ENCODE measurements at regions of chr2 and their contacts with region 1.

Region 1: DNA sequence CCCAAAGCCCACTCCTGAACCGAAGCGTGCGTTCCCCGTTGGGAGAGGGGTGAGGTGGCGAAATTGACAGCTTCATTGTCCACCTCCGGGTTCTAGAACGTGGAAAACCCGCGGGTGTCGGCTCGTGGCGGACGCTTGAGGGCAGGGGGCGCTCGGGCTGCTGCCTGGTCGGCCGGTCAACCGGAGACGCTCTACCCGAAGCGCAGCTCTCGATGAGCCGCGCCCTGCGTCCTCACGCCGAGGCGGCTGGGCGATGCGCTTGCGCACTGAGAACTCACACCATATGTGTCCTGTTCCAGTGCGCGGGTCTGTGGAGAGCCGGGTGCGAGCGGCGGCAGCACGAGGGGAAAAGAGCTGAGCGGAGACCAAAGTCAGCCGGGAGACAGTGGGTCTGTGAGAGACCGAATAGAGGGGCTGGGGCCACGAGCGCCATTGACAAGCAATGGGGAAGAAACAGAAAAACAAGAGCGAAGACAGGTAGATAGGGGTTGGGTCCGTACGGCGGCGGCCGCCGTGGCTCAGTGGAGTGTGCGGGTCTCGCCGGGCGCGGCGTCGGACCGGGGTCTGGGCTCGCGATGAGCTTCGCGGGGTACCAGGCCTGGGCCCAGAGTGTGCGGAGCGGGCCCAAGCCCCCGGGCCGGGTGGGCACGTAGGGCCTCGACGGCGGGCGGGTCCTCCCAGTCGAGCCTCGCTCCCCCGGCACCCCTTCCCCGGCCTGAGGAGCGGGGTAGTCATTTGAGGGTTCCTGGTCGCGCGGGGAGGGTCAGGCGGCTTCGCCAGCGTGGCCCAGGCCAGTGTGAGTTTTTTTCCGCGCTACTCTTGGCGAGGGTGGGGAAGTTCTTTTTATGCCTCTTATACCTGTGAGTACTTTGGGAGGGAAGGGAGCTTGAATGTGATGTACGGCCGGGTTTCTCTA is at the start of gene EIF5B:
- DNase-seq: peak; percentile 96
- ATAC-seq: peak; percentile 92
- H3K4me3 ChIP-seq: peak within 1 kb of the TSS; percentile 88 to 98 (median 94)
- H3K27ac ChIP-seq: peak within 1 kb of the TSS; percentile 88
- H3K4me1 ChIP-seq: peaks cover 64% of the 10 kb centered on the region
- H3K27me3 ChIP-seq: no peaks in the 10 kb centered on the region; a peak in 1 of 5 replicates
- CTCF ChIP-seq: peak; percentile 98
- EP300 ChIP-seq: peak in 1 of 2 experiments; percentile 41; a peak in 1 of 4 replicates
- POLR2A ChIP-seq: peak; percentile 86 to 93
- RAD21 ChIP-seq: peak; percentile 50
- total RNA-seq, gene EIF5B: 32.1 and 66.4 TPM in 2 replicates

Region 2: DNA sequence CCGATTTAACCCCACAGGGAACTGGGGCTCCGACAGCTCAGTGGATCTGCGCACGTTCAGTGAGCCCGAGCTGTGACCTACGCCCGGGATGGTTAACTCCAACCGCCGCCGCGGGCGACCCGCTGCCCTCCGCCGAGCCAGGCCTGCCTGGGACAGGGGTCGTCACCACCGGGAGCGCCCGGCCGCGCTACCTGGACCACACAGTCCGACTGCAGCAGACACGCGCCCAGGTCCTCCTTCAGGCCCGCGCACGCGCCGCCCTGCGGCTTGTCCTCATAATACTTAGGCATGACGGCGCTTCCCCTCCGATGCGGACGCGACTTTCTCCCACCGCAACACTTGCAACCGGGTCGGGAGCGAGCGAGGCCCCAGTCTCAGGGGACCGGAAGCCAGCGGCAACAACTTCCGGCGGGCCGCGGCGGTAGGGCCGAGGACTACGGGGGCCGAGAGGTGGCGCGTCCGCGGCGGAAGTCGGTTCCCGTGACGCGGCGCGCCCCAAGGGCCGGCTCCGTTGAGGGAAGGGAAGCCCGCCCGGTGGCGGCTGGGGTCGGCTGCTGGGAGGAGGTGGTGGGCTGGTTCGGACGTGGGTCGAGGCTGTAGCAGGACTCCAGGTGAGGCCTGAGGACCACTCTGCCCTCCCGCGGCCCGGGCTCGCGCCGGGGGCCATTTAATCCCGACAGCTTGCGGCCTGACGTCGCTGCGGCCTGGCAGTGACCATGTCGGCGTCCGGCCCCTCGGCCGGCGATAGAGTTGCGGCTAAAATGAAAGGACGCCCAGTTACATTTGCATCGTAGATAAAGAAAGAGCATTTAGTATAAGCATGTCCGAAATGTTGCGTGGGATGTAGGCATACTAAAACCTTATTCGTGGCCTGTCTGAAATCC is 729.0 kb before region 1 on chr2 and contains the starts of genes COA5 and UNC50:
- CTCF ChIA-PET with region 1: no interaction called
- POLR2A ChIA-PET with region 1: no interaction called
- in situ Hi-C with region 1: no loop called
- intact Hi-C with region 1: loop called (anchors 5 kb)
- DNase-seq: peak; percentile 86
- ATAC-seq: peak; percentile 95
- H3K4me3 ChIP-seq: peak within 1 kb of the TSS; percentile 95 to 98 (median 97)
- H3K27ac ChIP-seq: peak within 1 kb of the TSS; percentile 88
- H3K4me1 ChIP-seq: peaks cover 41% of the 10 kb centered on the region
- H3K27me3 ChIP-seq: no peaks in the 10 kb centered on the region; a peak in 1 of 5 replicates
- CTCF ChIP-seq: peak; percentile 42; the same call in 1 of the 2 replicates
- EP300 ChIP-seq: peak; percentile 48 to 51; a peak in 1 of 4 replicates
- POLR2A ChIP-seq: peak; percentile 92 to 97
- RAD21 ChIP-seq: peak; percentile 52
- total RNA-seq, gene COA5: 64.5 and 72.9 TPM in 2 replicates
- total RNA-seq, gene UNC50: 58.0 and 95.6 TPM in 2 replicates

Region 3: DNA sequence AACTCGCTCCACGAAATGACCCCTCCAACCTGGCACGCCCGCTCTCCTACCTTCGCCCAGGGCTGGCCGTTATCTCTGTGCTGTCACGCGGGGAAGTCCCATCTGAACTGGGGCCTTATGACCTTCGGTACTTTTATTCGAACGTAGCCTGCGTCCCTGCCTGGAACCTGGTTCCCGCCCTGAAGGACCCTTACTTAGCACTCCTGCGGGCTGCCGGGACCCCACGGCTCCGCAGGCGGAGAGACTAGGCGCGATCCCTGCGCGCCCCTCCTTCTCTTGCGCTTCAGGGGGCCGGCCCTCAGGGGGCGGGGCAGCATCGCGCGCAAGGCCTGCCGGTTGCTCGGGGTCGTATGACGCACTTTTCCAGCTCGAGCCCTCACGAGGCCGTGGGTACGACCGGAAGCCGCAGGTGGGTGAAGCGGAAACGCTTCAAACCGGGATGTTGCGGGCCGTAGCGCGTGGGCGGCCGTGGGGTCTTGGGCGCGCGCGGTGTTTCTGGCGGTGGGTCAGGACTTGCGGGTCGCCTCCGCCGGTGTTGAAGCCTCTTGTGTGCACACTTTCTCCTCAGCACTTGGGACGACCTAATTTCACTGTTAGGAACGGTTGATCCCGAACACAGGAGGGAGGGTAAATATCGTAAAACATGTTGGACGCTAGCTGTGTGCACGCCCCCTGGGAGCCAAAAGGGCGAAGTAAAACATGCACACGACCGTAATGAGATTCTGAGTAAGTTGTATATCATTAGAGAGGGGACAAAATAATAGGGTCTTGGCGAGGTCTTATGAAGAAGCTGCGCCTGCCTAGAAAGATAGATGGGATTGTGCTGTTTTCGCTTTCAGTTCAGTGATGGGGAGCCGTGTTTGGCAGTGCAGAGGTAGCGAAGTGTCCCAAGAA is 182.5 kb before region 1 on chr2 and contains the starts of genes LIPT1 and TSGA10:
- CTCF ChIA-PET with region 1: no interaction called
- POLR2A ChIA-PET with region 1: interaction called, 30 read pairs
- in situ Hi-C with region 1: no loop called
- intact Hi-C with region 1: no loop called
- DNase-seq: peak; percentile 93
- ATAC-seq: peak; percentile 97
- H3K4me3 ChIP-seq: peak within 1 kb of the TSS; percentile 80 to 90 (median 85)
- H3K27ac ChIP-seq: peak within 1 kb of the TSS; percentile 79
- H3K4me1 ChIP-seq: peaks cover 44% of the 10 kb centered on the region
- H3K27me3 ChIP-seq: no peaks in the 10 kb centered on the region; a peak in 1 of 5 replicates
- CTCF ChIP-seq: peak; percentile 54
- EP300 ChIP-seq: no peak; a peak in 1 of 4 replicates
- POLR2A ChIP-seq: peak; percentile 93 to 99
- RAD21 ChIP-seq: peak; percentile 50; the same call in 1 of the 2 replicates
- total RNA-seq, gene LIPT1: 8.0 and 8.3 TPM in 2 replicates
- total RNA-seq, gene TSGA10: 13.1 and 15.0 TPM in 2 replicates

Region 4: GRCh38 chr2:99278793-99279291 is 58.5 kb before region 1 on chr2:
- CTCF ChIA-PET with region 1: no interaction called
- POLR2A ChIA-PET with region 1: interaction called, 22 read pairs
- in situ Hi-C with region 1: no loop called
- intact Hi-C with region 1: loop called (anchors 1 kb)
- DNase-seq: peak; percentile 99
- ATAC-seq: peak; percentile 93
- H3K4me3 ChIP-seq: peak overlapping the region in 2 of 3 experiments; percentile 4 to 49; a peak in 2 of 6 replicates
- H3K27ac ChIP-seq: peak overlapping the region; percentile 64
- H3K4me1 ChIP-seq: peaks cover 39% of the 10 kb centered on the region
- H3K27me3 ChIP-seq: no peaks in the 10 kb centered on the region
- CTCF ChIP-seq: no peak
- EP300 ChIP-seq: peak in 1 of 2 experiments; percentile 97; a peak in 2 of 4 replicates
- POLR2A ChIP-seq: no peak
- RAD21 ChIP-seq: no peak

Region 5: GRCh38 chr2:99374747-99375146 is 37.4 kb after region 1 on chr2:
- CTCF ChIA-PET with region 1: no interaction called
- POLR2A ChIA-PET with region 1: no interaction called
- in situ Hi-C with region 1: no loop called
- intact Hi-C with region 1: loop called (anchors 5 kb)
- DNase-seq: no peak
- ATAC-seq: no peak
- H3K4me3 ChIP-seq: no peak overlapping the region
- H3K27ac ChIP-seq: no peak overlapping the region
- H3K4me1 ChIP-seq: no peaks in the 10 kb centered on the region
- H3K27me3 ChIP-seq: no peaks in the 10 kb centered on the region
- CTCF ChIP-seq: no peak
- EP300 ChIP-seq: no peak
- POLR2A ChIP-seq: no peak
- RAD21 ChIP-seq: no peak

Region 6: GRCh38 chr2:99489761-99490622 is 152.6 kb after region 1 on chr2 and contains the start of gene REV1:
- CTCF ChIA-PET with region 1: no interaction called
- POLR2A ChIA-PET with region 1: interaction called, 8 read pairs
- in situ Hi-C with region 1: no loop called
- intact Hi-C with region 1: loop called (anchors 1 kb)
- DNase-seq: peak; percentile 91
- ATAC-seq: peak; percentile 86
- H3K4me3 ChIP-seq: peak within 1 kb of the TSS; percentile 79 to 99 (median 97)
- H3K27ac ChIP-seq: peak within 1 kb of the TSS; percentile 76
- H3K4me1 ChIP-seq: peaks cover 42% of the 10 kb centered on the region
- H3K27me3 ChIP-seq: no peaks in the 10 kb centered on the region; a peak in 3 of 5 replicates
- CTCF ChIP-seq: peak; percentile 93
- EP300 ChIP-seq: peak in 1 of 2 experiments; percentile 23; a peak in 2 of 4 replicates
- POLR2A ChIP-seq: peak in 1 of 2 experiments; percentile 80; a peak in 3 of 4 replicates
- RAD21 ChIP-seq: peak; percentile 94
- total RNA-seq, gene REV1: 38.5 and 49.1 TPM in 2 replicates

Region 7: GRCh38 chr2:99754210-99754609 is 416.8 kb after region 1 on chr2:
- CTCF ChIA-PET with region 1: no interaction called
- POLR2A ChIA-PET with region 1: no interaction called
- in situ Hi-C with region 1: no loop called
- intact Hi-C with region 1: no loop called
- DNase-seq: no peak
- ATAC-seq: no peak
- H3K4me3 ChIP-seq: no peak overlapping the region
- H3K27ac ChIP-seq: no peak overlapping the region
- H3K4me1 ChIP-seq: no peaks in the 10 kb centered on the region
- H3K27me3 ChIP-seq: no peaks in the 10 kb centered on the region
- CTCF ChIP-seq: no peak
- EP300 ChIP-seq: no peak
- POLR2A ChIP-seq: no peak
- RAD21 ChIP-seq: no peak

Measured in HepG2 (cell line).